Mammary epithelial cell (primary cell): ENCODE measurements at regions of chr1 and their contacts with region 1.

Region 1: GRCh38 chr1:152141974-152142584 is 16.9 kb downstream of the RPTN start:
- DNase-seq: peak; percentile 54
- H3K4me3 ChIP-seq: no peak overlapping the region
- H3K27ac ChIP-seq: no peak overlapping the region
- H3K4me1 ChIP-seq: no peaks in the 10 kb centered on the region
- H3K27me3 ChIP-seq: peaks cover 7% of the 10 kb centered on the region
- CTCF ChIP-seq: peak; percentile 91 to 92

Region 2: GRCh38 chr1:152110860-152111514 is 31.1 kb before region 1 on chr1:
- CTCF ChIA-PET with region 1: no interaction called
- dilution Hi-C with region 1: no loop called
- in situ Hi-C with region 1: no loop called
- intact Hi-C with region 1: loop called (anchors 1 kb)
- DNase-seq: peak; percentile 71
- H3K4me3 ChIP-seq: peak overlapping the region; percentile 54 to 65 (median 55)
- H3K27ac ChIP-seq: no peak overlapping the region
- H3K4me1 ChIP-seq: peaks cover 51% of the 10 kb centered on the region
- H3K27me3 ChIP-seq: peaks cover 29% of the 10 kb centered on the region
- CTCF ChIP-seq: no peak

Region 3: DNA sequence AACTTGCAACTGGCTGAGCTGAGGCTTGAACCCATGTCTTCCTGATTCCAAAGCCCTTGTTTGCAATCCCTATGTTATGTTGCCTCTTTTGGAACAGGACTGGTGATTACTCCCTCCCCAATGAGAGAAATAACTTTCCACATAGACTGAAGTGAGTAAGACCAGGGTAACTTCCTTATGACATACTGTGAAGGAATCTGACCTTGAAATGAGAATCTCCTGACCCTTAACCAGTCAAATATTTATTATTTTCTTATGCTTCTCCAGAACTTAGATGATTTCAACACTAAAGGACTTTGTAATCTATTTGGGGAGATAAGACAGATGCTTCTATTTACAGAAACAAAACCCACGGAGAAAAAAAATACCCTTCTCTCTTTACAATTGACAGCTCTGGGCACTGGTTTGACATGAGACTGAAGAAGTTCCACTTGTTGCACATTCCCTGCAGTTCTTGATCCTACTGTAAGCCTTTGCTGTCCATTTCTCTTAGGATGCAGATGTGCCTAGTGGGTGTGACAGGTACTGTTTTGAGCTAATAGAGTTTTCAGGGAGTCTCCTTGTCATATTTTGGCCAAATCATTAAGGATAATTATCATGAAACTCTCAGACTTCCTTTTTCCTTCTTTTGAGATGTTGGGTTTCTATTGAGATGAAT is 20.9 kb after region 1 on chr1:
- CTCF ChIA-PET with region 1: interaction called, 4 read pairs
- dilution Hi-C with region 1: no loop called
- in situ Hi-C with region 1: no loop called
- intact Hi-C with region 1: loop called (anchors 2 kb)
- DNase-seq: peak; percentile 81
- H3K4me3 ChIP-seq: no peak overlapping the region
- H3K27ac ChIP-seq: peak overlapping the region; percentile 22
- H3K4me1 ChIP-seq: peaks cover 33% of the 10 kb centered on the region
- H3K27me3 ChIP-seq: no peaks in the 10 kb centered on the region
- CTCF ChIP-seq: peak in 1 of 2 donors; percentile 5

Region 4: GRCh38 chr1:152182431-152182830 is 40.4 kb after region 1 on chr1:
- CTCF ChIA-PET with region 1: interaction called, 7 read pairs
- dilution Hi-C with region 1: no loop called
- in situ Hi-C with region 1: loop called (anchors 5 kb)
- intact Hi-C with region 1: loop called (anchors 1 kb)
- DNase-seq: no peak
- H3K4me3 ChIP-seq: no peak overlapping the region
- H3K27ac ChIP-seq: peak overlapping the region; percentile 72
- H3K4me1 ChIP-seq: peaks cover 59% of the 10 kb centered on the region
- H3K27me3 ChIP-seq: no peaks in the 10 kb centered on the region
- CTCF ChIP-seq: peak; percentile 84 to 87

Region 5: DNA sequence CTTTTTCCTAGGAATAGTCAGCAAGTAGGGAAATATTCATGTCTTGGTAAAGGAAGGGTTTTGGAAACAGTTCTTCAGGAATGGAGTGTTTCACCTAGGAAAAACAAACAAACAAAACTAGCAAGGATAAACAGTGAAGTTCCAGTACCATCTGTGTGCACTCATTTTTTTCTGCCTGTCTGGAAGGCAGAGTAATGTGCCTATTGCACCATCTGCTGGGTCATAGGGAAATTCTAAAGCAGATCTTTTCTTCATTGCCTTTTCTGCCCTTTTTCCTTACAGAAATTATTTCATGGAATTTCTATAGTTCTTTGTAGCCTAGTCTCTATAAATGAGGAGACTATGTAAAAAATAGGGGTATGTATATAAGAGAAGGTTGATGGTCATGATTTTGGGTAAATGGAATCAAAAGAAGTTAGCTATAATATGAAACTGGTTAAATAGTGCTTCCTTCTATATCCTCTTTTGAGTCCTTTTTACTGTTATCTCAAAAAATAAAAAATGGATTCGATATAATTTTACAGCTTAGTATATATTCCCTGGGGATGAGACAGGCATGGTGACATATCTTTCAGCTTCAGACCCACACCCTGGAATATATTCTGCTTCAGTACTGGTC is 85.3 kb after region 1 on chr1:
- CTCF ChIA-PET with region 1: no interaction called
- dilution Hi-C with region 1: no loop called
- in situ Hi-C with region 1: no loop called
- intact Hi-C with region 1: loop called (anchors 1 kb)
- DNase-seq: peak; percentile 42
- H3K4me3 ChIP-seq: no peak overlapping the region
- H3K27ac ChIP-seq: no peak overlapping the region
- H3K4me1 ChIP-seq: peaks cover 34% of the 10 kb centered on the region
- H3K27me3 ChIP-seq: no peaks in the 10 kb centered on the region
- CTCF ChIP-seq: peak; percentile 7 to 41

Region 6: GRCh38 chr1:152347116-152347728 is 205.1 kb after region 1 on chr1:
- CTCF ChIA-PET with region 1: no interaction called
- dilution Hi-C with region 1: no loop called
- in situ Hi-C with region 1: no loop called
- intact Hi-C with region 1: loop called (anchors 2 kb)
- DNase-seq: peak; percentile 64
- H3K4me3 ChIP-seq: no peak overlapping the region
- H3K27ac ChIP-seq: no peak overlapping the region
- H3K4me1 ChIP-seq: no peaks in the 10 kb centered on the region
- H3K27me3 ChIP-seq: peaks cover 7% of the 10 kb centered on the region
- CTCF ChIP-seq: peak; percentile 93 to 99

Region 7: GRCh38 chr1:152440635-152441471 is 298.8 kb after region 1 on chr1:
- CTCF ChIA-PET with region 1: no interaction called
- dilution Hi-C with region 1: no loop called
- in situ Hi-C with region 1: loop called in 1 of 2 experiments (anchors 10 kb)
- intact Hi-C with region 1: loop called (anchors 1 kb)
- DNase-seq: peak; percentile 68
- H3K4me3 ChIP-seq: no peak overlapping the region
- H3K27ac ChIP-seq: no peak overlapping the region
- H3K4me1 ChIP-seq: peaks cover 34% of the 10 kb centered on the region
- H3K27me3 ChIP-seq: no peaks in the 10 kb centered on the region
- CTCF ChIP-seq: peak; percentile 91 to 92